ENCODE measurements at regions of chr9 and their contacts with region 1.

Region 1: GRCh38 chr9:87324613-87325194 is 173.0 kb upstream of the DAPK1 start:
- DNase-seq: peak; percentile 68
- ATAC-seq: peak; percentile 91
- H3K4me3 ChIP-seq: no peak overlapping the region
- H3K27ac ChIP-seq: no peak overlapping the region
- H3K4me1 ChIP-seq: no peaks in the 10 kb centered on the region
- H3K27me3 ChIP-seq: 0 out of 2 replicates have a peak, but pooled peaks cover 2% of the 10 kb centered on the region
- CTCF ChIP-seq: peak; percentile 85
- POLR2A ChIP-seq: 0 out of 2 replicates have a peak, but pooled peaks have one; percentile 39
- RAD21 ChIP-seq: peak; percentile 98

Region 2: GRCh38 chr9:86434039-86434726 is 890.5 kb before region 1 on chr9:
- CTCF ChIA-PET with region 1: interaction called, 5 read pairs
- POLR2A ChIA-PET with region 1: no interaction called
- dilution Hi-C with region 1: no loop called
- in situ Hi-C with region 1: loop called (anchors 5 kb)
- intact Hi-C with region 1: loop called (anchors 1 kb)
- DNase-seq: peak; percentile 79
- ATAC-seq: peak; percentile 93
- H3K4me3 ChIP-seq: no peak overlapping the region; the same call in 1 of the 2 replicates
- H3K27ac ChIP-seq: peak overlapping the region; percentile 21; the same call in 1 of the 2 replicates
- H3K4me1 ChIP-seq: no peaks in the 10 kb centered on the region
- H3K27me3 ChIP-seq: no peaks in the 10 kb centered on the region
- CTCF ChIP-seq: peak; percentile 89
- POLR2A ChIP-seq: no peak
- RAD21 ChIP-seq: peak; percentile 84

Region 3: GRCh38 chr9:86614871-86615849 is 709.5 kb before region 1 on chr9:
- CTCF ChIA-PET with region 1: interaction called, 3 read pairs
- POLR2A ChIA-PET with region 1: no interaction called
- dilution Hi-C with region 1: no loop called
- in situ Hi-C with region 1: no loop called
- intact Hi-C with region 1: loop called (anchors 5 kb)
- DNase-seq: peak; percentile 70
- ATAC-seq: peak; percentile 74
- H3K4me3 ChIP-seq: no peak overlapping the region
- H3K27ac ChIP-seq: peak overlapping the region; percentile 80; the same call in 1 of the 2 replicates
- H3K4me1 ChIP-seq: peaks cover 8% of the 10 kb centered on the region
- H3K27me3 ChIP-seq: no peaks in the 10 kb centered on the region
- CTCF ChIP-seq: peak; percentile 46
- POLR2A ChIP-seq: no peak
- RAD21 ChIP-seq: peak; percentile 50

Region 4: GRCh38 chr9:86721843-86722711 is 602.6 kb before region 1 on chr9:
- CTCF ChIA-PET with region 1: no interaction called
- POLR2A ChIA-PET with region 1: no interaction called
- dilution Hi-C with region 1: no loop called
- in situ Hi-C with region 1: no loop called
- intact Hi-C with region 1: loop called (anchors 5 kb)
- DNase-seq: peak; percentile 93
- ATAC-seq: peak; percentile 96
- H3K4me3 ChIP-seq: no peak overlapping the region
- H3K27ac ChIP-seq: peak overlapping the region; percentile 94
- H3K4me1 ChIP-seq: peaks cover 20% of the 10 kb centered on the region
- H3K27me3 ChIP-seq: no peaks in the 10 kb centered on the region
- CTCF ChIP-seq: no peak
- POLR2A ChIP-seq: no peak
- RAD21 ChIP-seq: 0 out of 2 replicates have a peak, but pooled peaks have one; percentile 8

Region 5: GRCh38 chr9:87119328-87119881 is 205.3 kb before region 1 on chr9:
- CTCF ChIA-PET with region 1: no interaction called
- POLR2A ChIA-PET with region 1: no interaction called
- dilution Hi-C with region 1: no loop called
- in situ Hi-C with region 1: no loop called
- intact Hi-C with region 1: loop called (anchors 5 kb)
- DNase-seq: peak; percentile 84
- ATAC-seq: peak; percentile 80
- H3K4me3 ChIP-seq: no peak overlapping the region
- H3K27ac ChIP-seq: peak overlapping the region; percentile 95
- H3K4me1 ChIP-seq: peaks cover 5% of the 10 kb centered on the region
- H3K27me3 ChIP-seq: no peaks in the 10 kb centered on the region
- CTCF ChIP-seq: no peak
- POLR2A ChIP-seq: no peak
- RAD21 ChIP-seq: no peak

Region 6: DNA sequence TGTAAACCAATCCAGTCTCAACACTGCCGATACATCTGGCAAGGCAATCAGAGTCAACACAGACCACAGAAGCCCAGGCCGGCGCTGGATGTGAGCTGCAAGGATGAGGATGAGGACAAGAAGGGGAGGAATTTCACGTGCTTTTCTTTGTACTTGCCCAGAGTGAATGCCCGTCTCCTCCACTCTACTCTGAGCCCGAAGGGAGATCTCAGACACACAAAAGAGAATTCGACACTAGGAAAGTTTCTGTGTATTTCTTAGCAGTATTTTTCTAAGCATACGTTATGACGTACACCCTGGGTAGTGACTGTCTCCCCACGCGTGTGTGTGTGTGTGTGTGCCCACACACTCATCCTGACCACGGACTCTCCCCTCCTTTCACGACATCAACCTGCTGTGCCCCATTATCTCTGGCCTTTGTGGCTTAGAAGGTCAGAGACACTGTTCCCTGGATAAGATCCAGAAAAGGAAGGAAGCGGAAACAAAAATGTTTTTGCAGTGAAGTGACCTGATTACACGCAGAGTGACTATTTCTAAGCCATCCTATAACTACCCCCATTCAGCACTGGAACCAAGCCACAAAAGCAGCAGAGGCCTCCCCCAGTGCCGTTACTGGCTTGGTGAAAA is 54.4 kb before region 1 on chr9:
- CTCF ChIA-PET with region 1: no interaction called
- POLR2A ChIA-PET with region 1: no interaction called
- dilution Hi-C with region 1: no loop called
- in situ Hi-C with region 1: no loop called
- intact Hi-C with region 1: loop called (anchors 5 kb)
- DNase-seq: peak; percentile 85
- ATAC-seq: peak; percentile 74
- H3K4me3 ChIP-seq: no peak overlapping the region
- H3K27ac ChIP-seq: peak overlapping the region; percentile 65
- H3K4me1 ChIP-seq: peaks cover 23% of the 10 kb centered on the region
- H3K27me3 ChIP-seq: no peaks in the 10 kb centered on the region
- CTCF ChIP-seq: no peak
- POLR2A ChIP-seq: peak; percentile 35; the same call in 1 of the 2 replicates
- RAD21 ChIP-seq: no peak

Measured in IMR-90 (cell line).